ENCODE measurements at regions of chr21 and their contacts with region 1.

Region 1: DNA sequence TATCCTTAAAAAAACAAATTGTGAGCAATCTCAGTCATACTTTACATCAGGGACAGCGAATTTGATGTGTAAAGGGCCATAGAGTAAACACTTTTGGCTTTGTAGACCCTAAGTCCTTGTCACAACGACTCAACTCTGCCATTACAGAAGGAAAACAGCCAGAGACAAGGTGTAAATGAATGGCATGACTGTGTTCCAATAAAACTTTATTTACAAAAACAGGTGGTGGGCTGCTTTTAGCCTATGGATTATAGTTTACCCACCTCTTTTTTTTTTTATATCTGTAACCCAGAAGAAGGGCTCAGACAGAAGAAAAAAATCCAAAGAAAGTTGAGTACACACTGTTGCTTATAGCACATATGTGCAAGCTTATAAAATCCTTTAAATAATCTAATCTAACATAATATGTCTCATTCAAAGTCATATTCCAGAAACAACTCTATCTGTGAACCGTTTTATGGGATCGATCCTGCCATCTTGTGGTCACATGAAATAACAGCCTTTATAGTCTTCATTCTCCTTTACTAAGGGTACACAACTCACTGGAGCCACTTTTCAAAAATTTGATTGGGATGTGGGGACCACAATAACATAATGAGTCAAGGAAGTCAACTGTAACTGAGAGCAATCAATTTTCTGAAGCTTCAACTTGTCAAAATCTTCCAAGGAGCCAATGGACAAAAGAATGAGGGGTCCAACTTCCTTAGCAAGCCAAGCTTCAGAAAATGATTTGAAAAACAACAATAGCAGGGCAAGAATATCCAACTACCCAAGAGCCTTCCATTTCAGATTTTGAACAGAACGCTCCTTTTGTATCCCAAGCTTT is 142.2 kb upstream of the KRTAP19-8 start:
- DNase-seq: peak in 3 of 9 experiments; percentile 24 to 69 (median 55)
- ATAC-seq: no peak
- H3K4me3 ChIP-seq: no peak overlapping the region
- H3K4me3 Mint-ChIP-seq: peak overlapping the region; percentile 62
- H3K27ac ChIP-seq: peak overlapping the region in 1 of 2 experiments; percentile 2
- H3K27ac Mint-ChIP-seq: peak overlapping the region; percentile 94
- H3K4me1 ChIP-seq: peaks cover 68% of the 10 kb centered on the region
- H3K4me1 Mint-ChIP-seq: peaks cover 71% of the 10 kb centered on the region
- H3K27me3 ChIP-seq: no peaks in the 10 kb centered on the region
- H3K27me3 Mint-ChIP-seq: no peaks in the 10 kb centered on the region
- CTCF ChIP-seq: peak; percentile 35

Region 2: GRCh38 chr21:31098576-31099005 is 81.9 kb before region 1 on chr21:
- CTCF ChIA-PET with region 1: interaction called, 101 read pairs
- POLR2A ChIA-PET with region 1: interaction called, 6 read pairs
- intact Hi-C with region 1: loop called (anchors 1 kb)
- DNase-seq: peak; percentile 54 to 85 (median 73)
- ATAC-seq: peak; percentile 78
- H3K4me3 ChIP-seq: no peak overlapping the region
- H3K4me3 Mint-ChIP-seq: no peak overlapping the region
- H3K27ac ChIP-seq: no peak overlapping the region
- H3K27ac Mint-ChIP-seq: no peak overlapping the region
- H3K4me1 ChIP-seq: no peaks in the 10 kb centered on the region
- H3K4me1 Mint-ChIP-seq: peaks cover 22% of the 10 kb centered on the region
- H3K27me3 ChIP-seq: no peaks in the 10 kb centered on the region
- H3K27me3 Mint-ChIP-seq: no peaks in the 10 kb centered on the region
- CTCF ChIP-seq: peak; percentile 90

Region 3: DNA sequence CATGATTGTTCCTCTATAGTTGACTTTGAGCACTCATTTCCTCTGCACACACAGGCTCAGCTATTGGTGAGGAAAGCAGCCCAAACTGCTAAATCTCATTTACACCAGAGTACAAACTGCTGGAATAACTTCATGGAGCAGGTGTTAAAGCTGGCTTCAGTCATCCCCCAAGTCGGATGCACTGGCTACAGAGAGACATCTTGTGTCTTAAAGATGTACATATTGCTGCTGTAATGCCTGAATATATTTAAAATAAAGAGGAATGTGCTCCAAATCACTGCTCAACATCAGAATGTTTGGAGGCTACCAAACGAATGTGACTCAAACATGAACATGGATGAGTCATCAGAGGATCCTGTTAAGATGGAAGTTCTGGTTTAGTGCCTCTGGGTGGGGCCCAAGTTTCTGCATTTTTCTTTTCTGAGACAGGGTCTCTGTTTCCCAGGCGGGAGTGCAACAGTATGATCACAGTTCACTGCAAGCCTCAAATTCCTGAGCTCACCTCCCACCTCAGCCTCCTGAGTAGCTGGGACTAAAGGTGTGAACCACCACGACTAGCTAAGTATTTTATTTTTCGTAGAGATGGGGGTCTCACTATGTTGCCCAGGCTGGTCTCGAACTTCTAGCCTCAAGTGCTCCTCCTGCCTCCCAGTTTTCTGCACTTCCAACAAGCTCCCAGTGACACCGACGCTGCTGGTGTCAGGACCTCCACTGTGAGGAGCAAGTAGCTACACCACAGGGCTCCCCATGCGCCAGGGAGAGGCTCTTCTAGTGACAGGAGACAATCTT is 63.1 kb before region 1 on chr21:
- CTCF ChIA-PET with region 1: interaction called, 53 read pairs
- POLR2A ChIA-PET with region 1: interaction called, 5 read pairs
- intact Hi-C with region 1: no loop called
- DNase-seq: peak in 1 of 9 experiments; percentile 16
- ATAC-seq: no peak
- H3K4me3 ChIP-seq: no peak overlapping the region
- H3K4me3 Mint-ChIP-seq: no peak overlapping the region
- H3K27ac ChIP-seq: no peak overlapping the region
- H3K27ac Mint-ChIP-seq: no peak overlapping the region
- H3K4me1 ChIP-seq: no peaks in the 10 kb centered on the region
- H3K4me1 Mint-ChIP-seq: peaks cover 1% of the 10 kb centered on the region
- H3K27me3 ChIP-seq: no peaks in the 10 kb centered on the region
- H3K27me3 Mint-ChIP-seq: peaks cover 3% of the 10 kb centered on the region
- CTCF ChIP-seq: no peak

Region 4: GRCh38 chr21:31142600-31142999 is 37.9 kb before region 1 on chr21:
- CTCF ChIA-PET with region 1: interaction called, 23 read pairs
- POLR2A ChIA-PET with region 1: no interaction called
- intact Hi-C with region 1: loop called in 1 of 2 experiments (anchors 2 kb)
- DNase-seq: peak in 6 of 9 experiments; percentile 41 to 65 (median 54)
- ATAC-seq: peak; percentile 86
- H3K4me3 ChIP-seq: no peak overlapping the region
- H3K4me3 Mint-ChIP-seq: no peak overlapping the region
- H3K27ac ChIP-seq: no peak overlapping the region
- H3K27ac Mint-ChIP-seq: no peak overlapping the region
- H3K4me1 ChIP-seq: peaks cover 7% of the 10 kb centered on the region
- H3K4me1 Mint-ChIP-seq: peaks cover 18% of the 10 kb centered on the region
- H3K27me3 ChIP-seq: no peaks in the 10 kb centered on the region
- H3K27me3 Mint-ChIP-seq: no peaks in the 10 kb centered on the region
- CTCF ChIP-seq: peak; percentile 15

Region 5: DNA sequence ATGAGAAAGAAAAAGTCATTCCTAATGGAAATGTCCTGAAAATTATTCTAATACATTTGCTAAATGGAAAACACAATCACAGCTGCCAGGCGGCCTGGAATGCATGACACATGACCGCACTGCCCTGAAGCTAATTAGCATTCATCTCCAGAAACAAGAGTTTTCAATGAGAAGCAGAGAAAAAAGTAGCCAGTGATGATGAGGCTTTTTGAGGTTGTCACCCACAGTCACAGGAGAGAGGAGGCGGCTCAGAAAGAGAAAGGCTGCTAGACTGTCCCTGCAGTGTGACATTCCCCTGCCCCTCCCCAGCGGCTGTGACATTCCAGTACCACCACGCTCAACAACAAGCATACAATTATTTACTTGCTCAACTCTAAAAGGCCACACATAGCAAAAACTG is 19.3 kb before region 1 on chr21:
- CTCF ChIA-PET with region 1: interaction called, 46 read pairs
- POLR2A ChIA-PET with region 1: interaction called, 14 read pairs
- intact Hi-C with region 1: loop called in 1 of 2 experiments (anchors 1 kb)
- DNase-seq: no peak
- ATAC-seq: no peak
- H3K4me3 ChIP-seq: no peak overlapping the region
- H3K4me3 Mint-ChIP-seq: peak overlapping the region; percentile 26
- H3K27ac ChIP-seq: no peak overlapping the region
- H3K27ac Mint-ChIP-seq: peak overlapping the region; percentile 93
- H3K4me1 ChIP-seq: peaks cover 76% of the 10 kb centered on the region
- H3K4me1 Mint-ChIP-seq: peaks cover 80% of the 10 kb centered on the region
- H3K27me3 ChIP-seq: no peaks in the 10 kb centered on the region
- H3K27me3 Mint-ChIP-seq: no peaks in the 10 kb centered on the region
- CTCF ChIP-seq: no peak

Region 6: DNA sequence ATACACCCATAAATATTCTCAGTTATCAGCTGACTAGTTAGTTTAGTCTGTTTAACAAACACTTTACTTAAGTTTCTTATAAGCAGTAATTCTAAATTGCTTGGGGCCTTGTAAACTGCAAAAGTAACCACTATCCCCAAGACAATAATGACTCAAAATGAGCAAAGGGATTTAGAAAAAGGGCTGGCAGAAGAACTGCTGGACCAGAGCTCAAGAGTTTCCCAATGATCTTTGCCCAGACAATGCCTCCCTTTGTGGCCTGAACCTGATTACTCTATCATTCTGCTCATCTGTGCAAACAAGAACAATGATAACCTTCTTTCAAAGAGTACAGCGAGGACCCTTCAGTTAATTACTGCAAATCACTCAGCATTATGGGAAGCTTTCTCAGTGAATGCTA is 40.1 kb after region 1 on chr21:
- CTCF ChIA-PET with region 1: no interaction called
- POLR2A ChIA-PET with region 1: no interaction called
- intact Hi-C with region 1: no loop called
- DNase-seq: no peak
- ATAC-seq: no peak
- H3K4me3 ChIP-seq: no peak overlapping the region
- H3K4me3 Mint-ChIP-seq: no peak overlapping the region
- H3K27ac ChIP-seq: no peak overlapping the region
- H3K27ac Mint-ChIP-seq: no peak overlapping the region
- H3K4me1 ChIP-seq: no peaks in the 10 kb centered on the region
- H3K4me1 Mint-ChIP-seq: no peaks in the 10 kb centered on the region
- H3K27me3 ChIP-seq: no peaks in the 10 kb centered on the region
- H3K27me3 Mint-ChIP-seq: no peaks in the 10 kb centered on the region
- CTCF ChIP-seq: no peak

Region 7: DNA sequence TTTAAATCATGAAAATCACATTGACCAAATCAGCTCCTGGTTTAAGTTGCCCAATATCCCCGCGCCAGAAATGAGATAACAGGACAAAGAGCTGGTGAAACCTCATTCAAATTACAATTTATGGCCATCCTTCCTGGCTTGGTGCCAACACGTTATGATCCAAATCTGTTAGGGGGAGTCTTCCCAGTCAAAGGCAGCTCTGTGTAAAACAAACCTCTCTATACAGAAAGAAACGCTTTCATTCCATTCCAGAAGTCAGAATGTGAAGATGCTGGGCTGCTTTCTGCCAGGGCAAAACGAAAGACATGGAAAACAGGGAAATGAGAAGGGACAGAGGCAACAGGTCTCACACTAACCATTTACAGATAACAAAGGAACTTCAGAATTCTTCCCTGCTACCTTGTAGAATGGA is 217.1 kb after region 1 on chr21:
- CTCF ChIA-PET with region 1: no interaction called
- POLR2A ChIA-PET with region 1: no interaction called
- intact Hi-C with region 1: loop called in 1 of 2 experiments (anchors 5 kb)
- DNase-seq: no peak
- ATAC-seq: no peak
- H3K4me3 ChIP-seq: peak overlapping the region in 1 of 2 experiments; percentile 14
- H3K4me3 Mint-ChIP-seq: no peak overlapping the region
- H3K27ac ChIP-seq: no peak overlapping the region
- H3K27ac Mint-ChIP-seq: peak overlapping the region; percentile 84
- H3K4me1 ChIP-seq: peaks cover 47% of the 10 kb centered on the region
- H3K4me1 Mint-ChIP-seq: peaks cover 58% of the 10 kb centered on the region
- H3K27me3 ChIP-seq: peaks cover 0 to 2% of the 10 kb centered on the region in 2 experiments
- H3K27me3 Mint-ChIP-seq: no peaks in the 10 kb centered on the region
- CTCF ChIP-seq: no peak

Region 8: DNA sequence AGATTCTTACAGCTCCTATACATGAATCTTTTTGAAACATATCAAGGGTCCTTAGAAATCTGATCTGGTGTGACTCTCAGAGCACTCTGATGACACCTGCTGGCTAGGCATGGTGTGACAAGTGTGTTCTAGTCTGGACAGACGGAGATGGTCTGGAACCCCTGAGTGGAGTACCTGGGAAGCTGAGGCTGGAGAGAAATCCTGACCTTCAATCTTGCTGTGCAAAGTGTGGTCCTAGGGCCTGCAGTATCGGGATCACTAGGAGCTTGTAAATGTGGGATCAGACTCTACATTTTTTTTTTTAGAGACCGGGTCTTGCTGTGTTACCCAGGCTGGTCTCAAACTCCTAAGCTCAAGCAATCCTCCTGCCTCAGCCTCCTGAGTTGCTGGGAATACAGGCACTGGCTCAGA is 400.4 kb after region 1 on chr21:
- CTCF ChIA-PET with region 1: interaction called, 26 read pairs
- POLR2A ChIA-PET with region 1: no interaction called
- intact Hi-C with region 1: loop called in 1 of 2 experiments (anchors 1 kb)
- DNase-seq: peak; percentile 43 to 85 (median 73)
- ATAC-seq: peak; percentile 92
- H3K4me3 ChIP-seq: no peak overlapping the region
- H3K4me3 Mint-ChIP-seq: no peak overlapping the region
- H3K27ac ChIP-seq: no peak overlapping the region
- H3K27ac Mint-ChIP-seq: no peak overlapping the region
- H3K4me1 ChIP-seq: no peaks in the 10 kb centered on the region
- H3K4me1 Mint-ChIP-seq: no peaks in the 10 kb centered on the region
- H3K27me3 ChIP-seq: peaks cover 0 to 2% of the 10 kb centered on the region in 2 experiments
- H3K27me3 Mint-ChIP-seq: peaks cover 2% of the 10 kb centered on the region
- CTCF ChIP-seq: peak; percentile 79